ENCODE measurements at regions of chr4 and their contacts with region 1.

Region 1: DNA sequence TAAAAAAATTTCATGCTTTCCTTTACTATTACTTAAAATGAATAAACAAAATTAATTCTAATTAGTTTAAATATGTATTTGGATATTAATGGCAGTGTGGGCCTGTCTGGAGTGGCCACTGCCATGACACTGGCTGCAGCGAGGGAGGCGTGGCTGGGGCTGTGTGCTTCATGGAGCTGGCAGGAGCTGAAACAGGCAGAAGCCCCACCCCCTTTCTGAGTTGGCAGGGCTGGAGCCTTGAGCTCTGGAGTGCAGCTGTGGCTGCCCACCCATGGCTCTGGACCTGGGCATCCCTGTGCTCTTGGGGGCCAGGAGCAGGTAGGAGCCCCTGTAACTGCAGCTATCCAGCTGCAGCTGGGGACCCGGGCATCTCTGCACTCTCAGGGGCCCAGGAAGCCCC is 8.2 kb upstream of the HSD17B11 start:
- DNase-seq: peak in 1 of 2 experiments; percentile 54
- H3K4me3 ChIP-seq: no peak overlapping the region
- H3K27ac ChIP-seq: no peak overlapping the region
- H3K4me1 ChIP-seq: no peaks in the 10 kb centered on the region
- H3K27me3 ChIP-seq: no peaks in the 10 kb centered on the region
- CTCF ChIP-seq: no peak
- EP300 ChIP-seq: no peak
- POLR2A ChIP-seq: no peak
- RAD21 ChIP-seq: no peak

Region 2: GRCh38 chr4:87422104-87423052 is 23.2 kb after region 1 on chr4 and contains the start of gene NUDT9:
- CTCF ChIA-PET with region 1: interaction called, 9 read pairs
- POLR2A ChIA-PET with region 1: interaction called, 10 read pairs
- DNase-seq: peak; percentile 77 to 93
- H3K4me3 ChIP-seq: peak within 1 kb of the TSS; percentile 77 to 85 (median 82)
- H3K27ac ChIP-seq: peak within 1 kb of the TSS; percentile 87
- H3K4me1 ChIP-seq: peaks cover 2 to 19% (median 10%) of the 10 kb centered on the region in 4 experiments; a peak in 6 of 7 replicates
- H3K27me3 ChIP-seq: no peaks in the 10 kb centered on the region
- CTCF ChIP-seq: no peak
- EP300 ChIP-seq: no peak
- POLR2A ChIP-seq: peak; percentile 90 to 92
- RAD21 ChIP-seq: no peak
- total RNA-seq, gene NUDT9: 27.6 and 29.3 TPM in 2 replicates

Region 3: DNA sequence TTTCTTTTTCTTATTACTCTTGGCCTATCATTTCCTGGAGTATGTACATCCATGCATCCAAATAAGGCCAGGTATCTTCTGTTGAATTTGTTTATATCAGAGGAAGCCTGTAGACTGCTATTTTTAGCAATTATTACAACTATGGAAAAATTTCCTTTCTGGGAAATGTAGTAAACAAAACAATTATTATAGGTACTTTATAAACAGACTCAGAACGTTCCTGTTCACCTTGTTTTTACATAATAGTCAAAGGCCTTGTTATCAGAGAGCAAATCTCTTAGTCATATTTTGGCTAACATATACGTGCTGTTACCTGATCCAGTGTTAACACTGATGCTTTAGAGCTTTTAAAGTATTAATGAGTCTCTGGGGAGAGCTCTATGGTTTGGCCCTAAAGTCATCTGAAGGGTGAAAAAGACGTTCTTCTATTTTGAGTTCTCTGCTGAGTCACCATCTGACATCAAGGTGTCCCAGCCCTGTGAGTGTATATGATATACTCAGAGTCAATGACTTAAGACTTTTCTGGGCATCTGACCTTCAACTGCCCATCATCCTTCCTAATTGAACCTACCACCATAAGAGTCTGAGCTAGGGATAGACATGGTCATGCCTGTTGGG is 122.7 kb after region 1 on chr4:
- CTCF ChIA-PET with region 1: no interaction called
- POLR2A ChIA-PET with region 1: no interaction called
- DNase-seq: no peak
- H3K4me3 ChIP-seq: no peak overlapping the region
- H3K27ac ChIP-seq: no peak overlapping the region
- H3K4me1 ChIP-seq: peaks cover 2 to 8% (median 6%) of the 10 kb centered on the region in 4 experiments; a peak in 5 of 7 replicates
- H3K27me3 ChIP-seq: no peaks in the 10 kb centered on the region; a peak in 2 of 7 replicates
- CTCF ChIP-seq: no peak
- EP300 ChIP-seq: no peak
- POLR2A ChIP-seq: no peak
- RAD21 ChIP-seq: no peak

Measured in H1 (cell line).